HEK293 (cell line): ENCODE measurements at regions of chr14 and their contacts with region 1.

Region 1: DNA sequence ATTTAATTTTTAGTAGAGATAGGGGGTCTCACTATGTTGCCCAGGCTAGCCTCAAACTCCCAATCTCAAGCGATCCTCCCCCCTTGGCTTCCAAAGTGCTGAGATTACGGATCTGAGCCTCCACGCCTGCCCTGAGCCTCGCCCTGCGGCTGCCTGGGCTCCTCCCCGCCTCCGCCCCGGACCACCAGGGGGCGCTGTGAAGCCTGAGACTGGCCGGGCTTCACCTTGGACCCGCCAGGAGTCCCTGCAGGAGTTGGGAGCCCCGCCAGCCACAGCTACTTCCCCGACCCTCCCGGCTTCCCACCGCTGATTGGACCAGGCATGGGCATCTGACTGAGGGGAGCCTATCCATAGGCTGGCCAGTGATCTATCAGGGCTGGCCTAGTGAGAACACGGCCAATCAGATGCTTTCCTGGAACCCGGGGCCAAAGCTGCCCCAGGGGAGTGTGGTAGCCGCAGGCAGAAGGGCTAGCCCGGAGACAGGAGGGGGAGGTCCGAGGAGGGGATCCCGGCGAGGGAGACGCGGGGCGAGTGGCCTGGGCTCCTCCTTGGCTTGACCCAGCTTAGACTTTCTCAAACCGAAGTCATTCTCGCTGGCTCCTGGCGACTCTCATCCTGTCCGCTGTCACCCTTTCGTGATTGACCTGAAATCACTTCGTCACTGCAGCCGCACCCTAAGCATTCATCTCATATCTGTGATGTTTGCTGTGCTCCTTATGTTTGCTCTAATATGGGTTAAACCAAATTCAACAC is 15.1 kb upstream of the ANKRD9 start:
- H3K4me3 ChIP-seq: peak overlapping the region; percentile 64
- H3K27ac ChIP-seq: peak overlapping the region; percentile 75
- H3K4me1 ChIP-seq: no peaks in the 10 kb centered on the region
- CTCF ChIP-seq: peak; percentile 99

Region 2: GRCh38 chr14:102255401-102256190 is 269.0 kb before region 1 on chr14:
- CTCF ChIA-PET with region 1: no interaction called
- POLR2A ChIA-PET with region 1: no interaction called
- H3K4me3 ChIP-seq: no peak overlapping the region
- H3K27ac ChIP-seq: no peak overlapping the region
- H3K4me1 ChIP-seq: no peaks in the 10 kb centered on the region
- CTCF ChIP-seq: no peak

Region 3: DNA sequence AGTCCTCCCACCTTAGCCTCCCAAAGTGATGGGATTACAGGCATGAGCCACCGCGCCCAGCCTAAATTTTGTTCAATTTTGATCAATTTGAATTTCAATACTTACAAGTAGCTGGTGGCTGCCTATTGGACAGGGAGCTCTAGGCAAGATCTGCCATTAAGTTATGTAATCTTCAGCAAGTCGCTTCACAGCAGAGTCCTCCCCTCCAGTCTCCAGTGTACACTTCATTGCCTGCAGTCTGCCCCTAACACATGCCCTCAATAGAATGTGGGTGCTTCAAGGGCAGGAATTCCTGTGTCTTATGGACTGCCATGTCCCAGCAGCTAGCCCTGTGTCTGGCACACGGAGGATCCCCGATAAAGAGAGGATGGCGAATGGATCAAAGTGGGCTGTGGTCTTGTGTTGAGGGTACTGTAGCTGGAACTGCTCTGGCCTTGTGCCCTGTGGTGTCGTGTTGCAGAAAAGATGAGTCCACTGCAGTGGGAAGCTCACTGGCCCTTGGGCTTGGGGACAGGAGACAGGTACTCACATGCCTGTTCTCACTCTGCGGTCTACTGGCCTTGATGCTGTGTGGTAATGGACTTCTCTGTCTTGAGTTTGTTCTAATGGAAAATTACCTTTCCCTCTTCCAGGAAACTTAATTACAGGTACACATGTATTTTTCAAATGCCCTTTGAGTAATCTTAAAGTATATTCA is 94.3 kb before region 1 on chr14:
- CTCF ChIA-PET with region 1: no interaction called
- POLR2A ChIA-PET with region 1: no interaction called
- H3K4me3 ChIP-seq: no peak overlapping the region
- H3K27ac ChIP-seq: no peak overlapping the region
- H3K4me1 ChIP-seq: no peaks in the 10 kb centered on the region
- CTCF ChIP-seq: no peak

Region 4: GRCh38 chr14:102461490-102462338 is 62.9 kb before region 1 on chr14:
- CTCF ChIA-PET with region 1: no interaction called
- POLR2A ChIA-PET with region 1: no interaction called
- H3K4me3 ChIP-seq: no peak overlapping the region
- H3K27ac ChIP-seq: no peak overlapping the region
- H3K4me1 ChIP-seq: no peaks in the 10 kb centered on the region
- CTCF ChIP-seq: no peak

Region 5: GRCh38 chr14:102538594-102539552 is 14.2 kb after region 1 on chr14:
- CTCF ChIA-PET with region 1: interaction called, 11 read pairs
- POLR2A ChIA-PET with region 1: interaction called, 4 read pairs
- H3K4me3 ChIP-seq: no peak overlapping the region
- H3K27ac ChIP-seq: peak overlapping the region; percentile 58
- H3K4me1 ChIP-seq: peaks cover 12% of the 10 kb centered on the region
- CTCF ChIP-seq: no peak

Region 6: GRCh38 chr14:102548616-102549240 is 24.1 kb after region 1 on chr14:
- CTCF ChIA-PET with region 1: interaction called, 3 read pairs
- POLR2A ChIA-PET with region 1: interaction called, 10 read pairs
- H3K4me3 ChIP-seq: no peak overlapping the region
- H3K27ac ChIP-seq: no peak overlapping the region
- H3K4me1 ChIP-seq: no peaks in the 10 kb centered on the region; the same call in 1 of the 2 replicates
- CTCF ChIP-seq: no peak